B cell (primary cell): ENCODE measurements at regions of chr1 and their contacts with region 1.

Region 1: GRCh38 chr1:84772428-84772943 is 82.2 kb upstream of the SSX2IP start:
- DNase-seq: peak; percentile 73
- ATAC-seq: peak; percentile 56
- H3K4me3 ChIP-seq: no peak overlapping the region
- H3K4me3 Mint-ChIP-seq: no peak overlapping the region
- H3K27ac ChIP-seq: no peak overlapping the region
- H3K27ac Mint-ChIP-seq: no peak overlapping the region
- H3K4me1 ChIP-seq: no peaks in the 10 kb centered on the region
- H3K4me1 Mint-ChIP-seq: no peaks in the 10 kb centered on the region
- H3K27me3 ChIP-seq: peaks cover 0 to 7% (median 3%) of the 10 kb centered on the region in 4 experiments
- H3K27me3 Mint-ChIP-seq: peaks cover 18% of the 10 kb centered on the region
- CTCF ChIP-seq: peak; percentile 94

Region 2: DNA sequence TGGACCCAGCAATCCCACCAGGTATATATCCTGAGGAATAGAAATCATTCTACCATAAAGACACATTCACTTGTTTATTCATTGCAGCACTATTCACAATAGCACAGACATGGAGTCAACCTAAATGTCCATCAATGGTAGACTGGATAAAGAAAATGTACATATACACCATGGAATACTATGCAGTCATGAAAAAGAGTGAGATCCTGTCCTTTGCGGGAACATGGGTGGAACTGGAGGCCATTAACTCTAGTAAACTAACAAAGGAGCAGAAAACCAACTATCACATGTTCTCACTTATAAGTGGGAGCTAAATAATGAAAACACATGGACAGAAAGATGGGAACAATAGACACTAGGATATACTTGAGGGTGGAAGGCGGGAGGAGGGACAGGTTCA is 664.5 kb before region 1 on chr1:
- CTCF ChIA-PET with region 1: no interaction called
- POLR2A ChIA-PET with region 1: no interaction called
- intact Hi-C with region 1: no loop called
- DNase-seq: no peak
- ATAC-seq: no peak
- H3K4me3 ChIP-seq: no peak overlapping the region
- H3K4me3 Mint-ChIP-seq: no peak overlapping the region
- H3K27ac ChIP-seq: no peak overlapping the region
- H3K27ac Mint-ChIP-seq: no peak overlapping the region
- H3K4me1 ChIP-seq: no peaks in the 10 kb centered on the region
- H3K4me1 Mint-ChIP-seq: no peaks in the 10 kb centered on the region
- H3K27me3 ChIP-seq: no peaks in the 10 kb centered on the region
- H3K27me3 Mint-ChIP-seq: no peaks in the 10 kb centered on the region
- CTCF ChIP-seq: no peak

Region 3: GRCh38 chr1:84598846-84599741 is 173.4 kb before region 1 on chr1:
- CTCF ChIA-PET with region 1: no interaction called
- POLR2A ChIA-PET with region 1: no interaction called
- intact Hi-C with region 1: no loop called
- DNase-seq: no peak
- ATAC-seq: no peak
- H3K4me3 ChIP-seq: no peak overlapping the region
- H3K4me3 Mint-ChIP-seq: no peak overlapping the region
- H3K27ac ChIP-seq: no peak overlapping the region
- H3K27ac Mint-ChIP-seq: no peak overlapping the region
- H3K4me1 ChIP-seq: no peaks in the 10 kb centered on the region
- H3K4me1 Mint-ChIP-seq: peaks cover 12% of the 10 kb centered on the region
- H3K27me3 ChIP-seq: no peaks in the 10 kb centered on the region
- H3K27me3 Mint-ChIP-seq: no peaks in the 10 kb centered on the region
- CTCF ChIP-seq: no peak

Region 4: GRCh38 chr1:84620720-84621313 is 151.7 kb before region 1 on chr1:
- CTCF ChIA-PET with region 1: interaction called, 3 read pairs
- POLR2A ChIA-PET with region 1: no interaction called
- intact Hi-C with region 1: loop called (anchors 5 kb)
- DNase-seq: peak; percentile 90
- ATAC-seq: peak; percentile 92
- H3K4me3 ChIP-seq: peak overlapping the region in 4 of 5 experiments; percentile 59 to 84 (median 72)
- H3K4me3 Mint-ChIP-seq: peak overlapping the region; percentile 96
- H3K27ac ChIP-seq: no peak overlapping the region
- H3K27ac Mint-ChIP-seq: peak overlapping the region; percentile 69
- H3K4me1 ChIP-seq: peaks cover 0 to 4% of the 10 kb centered on the region in 2 donors
- H3K4me1 Mint-ChIP-seq: peaks cover 6% of the 10 kb centered on the region
- H3K27me3 ChIP-seq: peaks cover 0 to 5% (median 0%) of the 10 kb centered on the region in 4 experiments
- H3K27me3 Mint-ChIP-seq: peaks cover 6% of the 10 kb centered on the region
- CTCF ChIP-seq: peak; percentile 100

Region 5: GRCh38 chr1:84758968-84759491 is 13.5 kb before region 1 on chr1:
- CTCF ChIA-PET with region 1: interaction called, 12 read pairs
- POLR2A ChIA-PET with region 1: interaction called, 3 read pairs
- intact Hi-C with region 1: no loop called
- DNase-seq: no peak
- ATAC-seq: no peak
- H3K4me3 ChIP-seq: peak overlapping the region in 2 of 5 experiments; percentile 2 to 35
- H3K4me3 Mint-ChIP-seq: peak overlapping the region; percentile 52
- H3K27ac ChIP-seq: no peak overlapping the region
- H3K27ac Mint-ChIP-seq: no peak overlapping the region
- H3K4me1 ChIP-seq: peaks cover 6 to 9% of the 10 kb centered on the region in 2 donors
- H3K4me1 Mint-ChIP-seq: peaks cover 5% of the 10 kb centered on the region
- H3K27me3 ChIP-seq: peaks cover 0 to 13% (median 1%) of the 10 kb centered on the region in 4 experiments
- H3K27me3 Mint-ChIP-seq: peaks cover 33% of the 10 kb centered on the region
- CTCF ChIP-seq: no peak